Mucosa of descending colon (tissue), 3 donors: ENCODE measurements at regions of chr20 and their contacts with region 1.

Region 1: GRCh38 chr20:47392015-47392720 is 35.7 kb upstream of the ZMYND8 start:
- DNase-seq: no peak
- ATAC-seq: peak; percentile 85
- H3K4me3 ChIP-seq: no peak overlapping the region
- H3K4me1 ChIP-seq: no peaks in the 10 kb centered on the region
- CTCF ChIP-seq: no peak

Region 2: DNA sequence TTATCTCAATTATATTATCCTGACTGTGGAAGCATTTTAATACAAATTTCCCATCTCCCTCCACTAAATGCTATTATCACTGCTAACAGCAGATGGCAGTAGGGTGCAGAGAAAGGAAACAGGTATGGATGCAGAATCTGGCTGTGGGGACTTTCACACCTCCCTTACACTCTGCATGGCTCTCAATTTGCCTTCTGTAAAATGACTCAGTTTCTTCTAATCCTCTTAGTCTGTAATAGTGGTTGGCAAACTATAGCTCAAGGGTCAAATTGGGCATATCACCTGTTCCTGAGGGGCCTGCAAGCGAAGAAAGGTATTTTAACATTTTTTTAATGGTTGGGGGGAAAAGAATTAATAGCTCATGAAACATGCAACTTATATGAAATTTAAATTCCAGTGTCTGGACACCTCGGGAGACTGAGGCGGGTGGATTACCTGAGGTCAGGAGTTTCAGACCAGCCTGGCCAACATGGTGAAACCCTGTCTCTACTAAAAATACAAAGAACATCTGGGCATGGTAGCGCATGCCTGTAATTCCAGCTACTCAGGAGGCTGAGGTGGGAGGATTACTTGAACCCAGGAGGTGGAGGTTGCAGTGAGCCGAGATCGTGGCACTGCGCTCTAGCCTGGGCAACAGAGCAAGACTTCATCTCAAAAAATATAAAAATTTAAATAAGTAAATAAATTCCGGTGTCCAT is 119.1 kb before region 1 on chr20:
- intact Hi-C with region 1: loop called in 1 of 2 experiments (anchors 10 kb)
- DNase-seq: peak in 1 of 3 donors; percentile 77
- ATAC-seq: peak; percentile 88
- H3K4me3 ChIP-seq: no peak overlapping the region
- H3K4me1 ChIP-seq: no peaks in the 10 kb centered on the region
- CTCF ChIP-seq: peak; percentile 50

Region 3: GRCh38 chr20:47620808-47621805 is 228.9 kb after region 1 on chr20:
- intact Hi-C with region 1: loop called in 1 of 2 experiments (anchors 10 kb)
- DNase-seq: peak in 1 of 3 donors; percentile 27
- ATAC-seq: peak; percentile 42
- H3K4me3 ChIP-seq: no peak overlapping the region
- H3K4me1 ChIP-seq: no peaks in the 10 kb centered on the region
- CTCF ChIP-seq: peak; percentile 54

Region 4: GRCh38 chr20:47785854-47786764 is 393.9 kb after region 1 on chr20:
- intact Hi-C with region 1: no loop called
- DNase-seq: peak; percentile 69 to 76 (median 76)
- ATAC-seq: peak; percentile 72
- H3K4me3 ChIP-seq: peak overlapping the region; percentile 11
- H3K4me1 ChIP-seq: peaks cover 9% of the 10 kb centered on the region
- CTCF ChIP-seq: peak; percentile 28